ENCODE measurements at regions of chr15 and their contacts with region 1.

Region 1: GRCh38 chr15:69058830-69059556 is 44.5 kb downstream of the NOX5 start:
- DNase-seq: peak; percentile 82 to 97
- H3K4me3 ChIP-seq: no peak overlapping the region
- CTCF ChIP-seq: peak in 1 of 3 donors; percentile 71
- POLR2A ChIP-seq: no peak

Region 2: GRCh38 chr15:69265347-69265955 is 206.5 kb after region 1 on chr15:
- intact Hi-C with region 1: loop called (anchors 2 kb)
- DNase-seq: no peak
- H3K4me3 ChIP-seq: no peak overlapping the region
- CTCF ChIP-seq: peak in 1 of 3 donors; percentile 13
- POLR2A ChIP-seq: no peak

Region 3: DNA sequence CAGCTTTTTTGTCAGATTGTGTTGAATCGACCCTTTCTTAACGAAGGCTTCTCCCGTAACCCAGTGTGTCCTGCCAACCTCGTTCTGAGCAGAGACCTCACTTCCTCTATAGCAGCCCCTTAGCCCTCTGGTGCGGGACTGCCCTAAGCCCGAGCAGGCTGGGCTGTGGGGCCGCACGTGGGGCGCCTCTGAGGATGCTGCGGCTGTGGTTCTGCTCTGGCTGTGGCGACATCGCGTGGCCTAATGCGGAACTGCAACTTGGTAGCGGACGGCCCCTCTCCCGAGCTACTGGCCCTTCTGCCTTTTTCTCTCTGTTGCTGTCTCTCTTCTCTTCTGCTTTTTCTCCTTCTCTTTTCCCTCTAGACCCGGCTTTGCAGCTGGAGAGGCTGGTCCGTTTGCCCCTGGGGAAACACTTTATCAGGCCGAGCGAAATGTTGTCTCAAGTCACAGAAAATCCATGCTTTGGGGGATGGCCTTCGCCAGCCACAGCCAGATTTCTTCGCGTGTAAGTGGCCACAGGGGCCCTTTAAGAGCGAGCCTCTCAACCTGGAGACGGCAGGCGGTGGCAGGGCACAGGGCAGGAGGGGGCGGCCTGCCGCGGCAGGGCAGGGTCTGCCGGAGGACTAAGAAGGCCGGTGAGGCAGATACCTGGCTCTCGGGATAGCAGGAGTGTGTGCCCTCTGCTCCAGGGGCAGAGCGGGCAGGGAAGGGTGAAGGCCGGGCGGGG is 335.7 kb after region 1 on chr15:
- intact Hi-C with region 1: loop called (anchors 5 kb)
- DNase-seq: peak; percentile 67 to 96
- H3K4me3 ChIP-seq: no peak overlapping the region
- CTCF ChIP-seq: peak in 1 of 3 donors; percentile 90
- POLR2A ChIP-seq: no peak

Measured in lower leg skin (tissue), 4 donors.